GM10248 (cell line): ENCODE measurements at regions of chr1 and their contacts with region 1.

Region 1: GRCh38 chr1:101247404-101248287 is 10.8 kb downstream of the S1PR1 start:
- DNase-seq: peak; percentile 64
- CTCF ChIP-seq: no peak

Region 2: GRCh38 chr1:101259744-101260148 is 12.1 kb after region 1 on chr1:
- CTCF ChIA-PET with region 1: interaction called, 11 read pairs
- POLR2A ChIA-PET with region 1: no interaction called
- DNase-seq: no peak
- CTCF ChIP-seq: no peak

Region 3: DNA sequence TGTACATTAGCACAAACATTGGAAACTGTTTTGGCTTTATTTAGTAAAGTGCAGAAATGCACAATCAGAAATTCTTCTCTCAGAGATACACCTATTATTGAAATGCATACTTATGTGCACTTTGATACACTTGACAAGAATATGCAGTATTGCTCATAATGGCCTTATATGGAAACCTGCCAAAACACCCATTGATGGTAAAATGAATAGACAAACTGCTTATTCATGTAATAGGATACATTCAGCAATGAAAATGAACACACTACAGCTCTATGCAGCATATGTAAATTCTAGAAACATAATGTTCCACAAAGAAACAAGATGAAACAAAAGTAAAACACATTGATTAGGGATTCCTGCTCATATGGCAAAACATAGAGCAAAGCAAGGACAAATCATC is 213.1 kb after region 1 on chr1:
- CTCF ChIA-PET with region 1: no interaction called
- POLR2A ChIA-PET with region 1: no interaction called
- DNase-seq: no peak
- CTCF ChIP-seq: no peak